ENCODE measurements at regions of chr22 and their contacts with region 1.

Region 1: DNA sequence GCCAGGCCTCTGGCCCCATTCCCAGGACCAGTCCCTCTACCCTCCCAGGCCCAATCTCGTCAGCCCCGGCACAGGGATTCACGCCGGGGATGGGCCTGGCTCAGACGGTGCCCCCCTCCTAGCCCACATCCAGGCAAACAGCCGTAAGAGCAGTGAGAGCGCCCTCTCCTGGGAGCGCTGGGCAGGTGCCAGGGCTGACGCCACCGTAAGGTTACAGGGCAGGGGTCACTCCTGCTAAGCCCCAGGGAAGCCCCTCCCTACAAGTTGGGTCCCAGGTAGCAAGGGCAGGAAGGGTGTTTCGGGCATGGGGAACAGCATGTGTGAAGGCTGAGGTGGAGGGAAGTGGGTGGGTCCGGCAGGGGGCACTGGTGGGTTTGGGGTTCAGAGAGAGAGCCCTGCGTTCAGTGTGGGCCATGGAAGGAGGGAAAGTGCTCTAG is 19.2 kb upstream of the PPARA start:
- DNase-seq: no peak
- H3K4me3 ChIP-seq: no peak overlapping the region
- H3K27ac ChIP-seq: no peak overlapping the region
- H3K4me1 ChIP-seq: no peaks in the 10 kb centered on the region
- H3K27me3 ChIP-seq: no peaks in the 10 kb centered on the region
- CTCF ChIP-seq: no peak
- POLR2A ChIP-seq: no peak

Region 2: DNA sequence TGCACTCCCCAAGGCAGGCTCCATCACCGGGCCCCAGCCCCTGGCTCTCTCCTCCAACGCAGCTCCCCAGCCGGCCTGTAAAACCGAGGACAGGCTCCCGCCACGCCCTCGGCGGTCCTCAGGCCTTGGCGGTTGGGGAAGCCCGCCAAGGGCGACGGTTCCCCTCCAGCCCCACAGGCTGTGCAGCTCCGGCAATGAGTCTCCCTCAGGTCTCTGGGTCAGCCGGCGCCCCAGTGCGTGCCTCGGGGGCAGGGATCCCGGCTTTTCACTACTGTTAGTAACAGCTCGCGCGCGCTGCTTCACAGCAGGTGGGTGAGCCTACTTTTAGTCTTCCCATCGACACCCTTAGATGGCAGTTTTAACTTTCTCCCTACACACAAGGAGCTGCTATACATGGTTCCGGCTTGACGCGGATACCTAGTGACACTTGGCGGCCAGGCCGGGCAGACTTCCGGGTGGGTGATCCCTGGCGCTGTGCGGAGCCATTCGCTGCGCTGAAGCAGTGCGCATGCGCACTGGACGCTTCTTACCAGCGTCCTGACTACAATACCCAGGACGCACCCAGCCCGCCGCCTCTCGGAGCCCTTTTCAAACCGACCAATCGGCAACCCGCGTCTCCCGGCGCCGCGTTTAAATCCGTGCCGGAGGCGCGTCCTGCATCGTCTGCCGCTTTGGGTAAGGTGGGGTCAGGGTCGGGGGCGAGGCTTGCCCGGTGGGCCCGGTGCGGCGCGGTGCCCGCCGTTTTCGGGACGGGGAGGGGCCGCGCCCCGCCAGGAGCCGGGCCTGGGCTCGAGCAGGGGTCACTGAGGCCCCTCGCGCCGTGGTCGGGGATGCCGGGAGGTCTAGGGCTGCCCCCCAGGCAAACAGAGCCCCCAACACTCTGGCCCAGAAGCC is 165.3 kb after region 1 on chr22 and contains the start of gene GTSE1:
- intact Hi-C with region 1: loop called (anchors 10 kb)
- DNase-seq: peak; percentile 96 to 97
- H3K4me3 ChIP-seq: peak within 1 kb of the TSS; percentile 50 to 76 (median 67)
- H3K27ac ChIP-seq: peak within 1 kb of the TSS; percentile 95
- H3K4me1 ChIP-seq: peaks cover 0 to 3% of the 10 kb centered on the region in 2 donors
- H3K27me3 ChIP-seq: no peaks in the 10 kb centered on the region
- CTCF ChIP-seq: no peak
- POLR2A ChIP-seq: peak; percentile 34
- total RNA-seq, gene GTSE1: 0.29 to 0.48 TPM in 2 of 3 donors, not detected in the other